ENCODE measurements at regions of chr1 and their contacts with region 1.

Region 1: GRCh38 chr1:1122078-1122811 is 6.4 kb upstream of the C1orf159 start:
- DNase-seq: peak; percentile 95
- H3K4me3 ChIP-seq: peak overlapping the region; percentile 32 to 50 (median 36)
- H3K27ac ChIP-seq: no peak overlapping the region
- H3K4me1 ChIP-seq: peaks cover 12 to 14% (median 13%) of the 10 kb centered on the region in 4 donors
- H3K27me3 ChIP-seq: peaks cover 0 to 58% (median 3%) of the 10 kb centered on the region in 4 donors
- CTCF ChIP-seq: peak; percentile 80 to 93 (median 90)
- EP300 ChIP-seq: no peak
- POLR2A ChIP-seq: no peak

Region 2: DNA sequence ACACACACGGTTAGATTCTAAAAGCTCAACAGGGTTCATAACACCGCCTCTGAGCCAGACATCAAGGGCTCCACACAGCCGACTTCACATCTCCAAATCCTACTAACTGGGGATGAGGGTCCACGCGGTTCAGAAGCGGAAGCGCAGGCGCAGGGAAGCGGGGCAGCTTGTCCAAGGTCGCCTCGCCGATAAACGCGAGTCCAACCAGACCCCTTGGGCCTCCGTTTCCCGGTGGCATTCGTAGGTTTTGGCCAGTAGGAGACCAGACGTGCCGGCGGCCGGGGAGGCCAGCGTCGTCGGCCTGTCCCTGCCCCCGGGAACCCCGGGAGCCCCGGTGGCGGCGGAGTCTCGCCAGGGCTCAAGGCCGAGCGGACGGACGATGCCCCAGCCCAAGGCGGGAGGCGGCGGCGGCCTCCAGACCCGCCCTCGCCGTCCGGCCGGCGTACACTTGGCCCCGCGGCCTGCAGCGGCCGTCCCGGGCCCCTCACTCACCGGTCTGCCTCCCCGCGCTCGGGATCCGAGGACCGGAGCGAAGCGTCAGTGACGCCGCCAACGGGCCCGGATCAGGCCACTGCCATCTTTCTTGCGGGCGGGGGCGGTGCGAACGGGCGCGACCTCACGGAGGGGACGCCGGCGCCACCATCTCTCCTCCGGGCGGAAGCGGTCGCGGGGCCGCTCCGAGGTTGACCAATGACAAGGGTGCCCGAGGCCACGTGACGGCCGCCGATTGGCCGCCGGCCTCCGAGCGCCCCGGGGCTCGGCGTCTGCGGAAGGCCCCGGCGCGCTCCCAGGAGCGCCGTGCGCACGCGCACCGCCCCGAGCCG is 109.4 kb after region 1 on chr1 and contains the start of gene SDF4:
- intact Hi-C with region 1: loop called (anchors 5 kb)
- DNase-seq: peak; percentile 99
- H3K4me3 ChIP-seq: peak within 1 kb of the TSS; percentile 81 to 98 (median 92)
- H3K27ac ChIP-seq: peak within 1 kb of the TSS; percentile 89 to 97 (median 94)
- H3K4me1 ChIP-seq: peaks cover 32 to 68% (median 50%) of the 10 kb centered on the region in 4 donors
- H3K27me3 ChIP-seq: no peaks in the 10 kb centered on the region
- CTCF ChIP-seq: no peak
- EP300 ChIP-seq: no peak
- POLR2A ChIP-seq: peak; percentile 48
- total RNA-seq, gene SDF4: 88.5 to 125 (median 107) TPM

Region 3: DNA sequence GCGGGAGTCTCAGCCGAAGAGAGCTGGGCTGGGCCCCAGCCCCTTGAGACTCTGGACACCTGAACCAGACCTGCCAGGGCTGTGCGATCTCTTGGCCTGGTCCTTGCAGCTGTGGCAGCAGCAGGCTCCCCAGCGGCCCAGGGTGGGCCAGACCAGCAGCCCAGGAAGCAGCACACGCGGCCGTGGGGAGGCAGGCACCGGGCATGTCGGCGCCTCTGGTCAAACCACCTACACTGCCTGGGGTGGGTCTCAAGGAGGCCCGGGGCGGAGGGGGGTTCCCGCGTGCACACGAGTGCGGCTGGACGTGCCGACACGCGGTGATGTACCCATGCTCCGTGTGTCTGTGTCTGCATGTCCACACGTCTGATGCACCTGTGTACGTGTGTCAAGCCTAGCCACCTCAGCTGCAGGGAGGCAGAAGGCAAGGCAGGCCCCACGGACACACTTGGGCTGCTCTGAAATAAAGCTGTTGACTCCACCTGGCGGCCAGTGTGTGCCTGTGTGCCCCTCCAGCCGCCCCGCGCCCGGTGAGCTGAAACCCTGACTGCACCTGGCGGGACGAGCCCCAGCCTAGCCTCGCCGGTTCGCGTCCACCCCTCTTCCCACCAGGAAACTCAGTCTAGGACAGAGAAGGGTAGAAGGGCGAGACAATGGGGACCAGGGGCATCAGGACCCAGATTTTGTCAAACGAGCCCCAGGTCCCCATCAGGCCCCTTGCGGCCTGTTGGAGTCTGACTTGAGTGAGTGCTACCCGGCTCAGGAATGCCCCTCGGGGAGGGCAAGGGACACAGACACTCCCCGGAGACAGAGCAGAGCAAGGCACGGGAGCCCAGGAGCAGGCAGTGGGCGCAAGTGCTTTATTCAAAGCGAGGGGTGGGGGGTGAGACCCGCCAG is 169.6 kb after region 1 on chr1:
- intact Hi-C with region 1: loop called (anchors 2 kb)
- DNase-seq: peak; percentile 93
- H3K4me3 ChIP-seq: no peak overlapping the region
- H3K27ac ChIP-seq: no peak overlapping the region
- H3K4me1 ChIP-seq: peaks cover 0 to 20% (median 14%) of the 10 kb centered on the region in 4 donors
- H3K27me3 ChIP-seq: peaks cover 0 to 12% (median 0%) of the 10 kb centered on the region in 4 donors
- CTCF ChIP-seq: peak; percentile 56 to 74 (median 66)
- EP300 ChIP-seq: no peak
- POLR2A ChIP-seq: no peak